ENCODE measurements at regions of chr20 and their contacts with region 1.

Region 1: DNA sequence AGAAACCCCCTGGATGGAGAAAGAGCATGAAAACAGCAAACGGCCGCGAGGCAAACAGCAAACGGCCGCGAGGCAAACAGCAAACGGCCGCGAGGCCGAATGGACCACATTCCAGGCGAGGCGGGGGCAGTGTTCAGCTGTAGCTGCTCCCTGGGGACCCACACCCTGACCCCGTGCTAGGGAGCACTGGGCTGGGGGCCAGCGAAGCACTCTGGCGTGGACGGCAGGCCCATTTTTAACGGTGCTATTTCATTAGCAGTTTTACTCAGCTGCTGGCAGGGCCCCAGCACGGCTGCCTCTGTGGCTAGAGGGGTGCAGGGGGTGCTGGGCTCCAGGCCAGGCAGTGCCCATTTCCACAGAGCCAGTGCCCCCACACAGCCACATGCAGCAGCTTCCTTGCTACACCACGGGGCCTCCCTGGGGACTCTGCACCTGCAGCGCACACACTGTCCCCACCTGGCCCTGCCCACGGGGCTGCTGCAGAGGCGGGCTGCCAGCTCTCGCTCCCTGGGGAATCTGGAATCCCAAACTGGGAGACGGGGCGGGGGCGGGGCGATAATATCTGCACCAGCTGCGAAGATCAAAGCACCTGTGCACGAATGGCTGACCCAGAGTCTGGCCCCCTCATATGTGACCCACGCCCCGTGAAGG is 35.6 kb upstream of the SLCO4A1 start:
- DNase-seq: no peak
- ATAC-seq: peak; percentile 75
- H3K4me3 ChIP-seq: no peak overlapping the region
- H3K27ac ChIP-seq: peak overlapping the region; percentile 98
- H3K4me1 ChIP-seq: peaks cover 69% of the 10 kb centered on the region
- H3K27me3 ChIP-seq: no peaks in the 10 kb centered on the region
- CTCF ChIP-seq: no peak

Region 2: GRCh38 chr20:62494980-62495748 is 111.5 kb before region 1 on chr20:
- CTCF ChIA-PET with region 1: interaction called, 3 read pairs
- POLR2A ChIA-PET with region 1: no interaction called
- in situ Hi-C with region 1: no loop called
- intact Hi-C with region 1: loop called (anchors 5 kb)
- DNase-seq: no peak
- ATAC-seq: no peak
- H3K4me3 ChIP-seq: no peak overlapping the region
- H3K27ac ChIP-seq: peak overlapping the region; percentile 79
- H3K4me1 ChIP-seq: peaks cover 62% of the 10 kb centered on the region
- H3K27me3 ChIP-seq: no peaks in the 10 kb centered on the region
- CTCF ChIP-seq: no peak

Region 3: DNA sequence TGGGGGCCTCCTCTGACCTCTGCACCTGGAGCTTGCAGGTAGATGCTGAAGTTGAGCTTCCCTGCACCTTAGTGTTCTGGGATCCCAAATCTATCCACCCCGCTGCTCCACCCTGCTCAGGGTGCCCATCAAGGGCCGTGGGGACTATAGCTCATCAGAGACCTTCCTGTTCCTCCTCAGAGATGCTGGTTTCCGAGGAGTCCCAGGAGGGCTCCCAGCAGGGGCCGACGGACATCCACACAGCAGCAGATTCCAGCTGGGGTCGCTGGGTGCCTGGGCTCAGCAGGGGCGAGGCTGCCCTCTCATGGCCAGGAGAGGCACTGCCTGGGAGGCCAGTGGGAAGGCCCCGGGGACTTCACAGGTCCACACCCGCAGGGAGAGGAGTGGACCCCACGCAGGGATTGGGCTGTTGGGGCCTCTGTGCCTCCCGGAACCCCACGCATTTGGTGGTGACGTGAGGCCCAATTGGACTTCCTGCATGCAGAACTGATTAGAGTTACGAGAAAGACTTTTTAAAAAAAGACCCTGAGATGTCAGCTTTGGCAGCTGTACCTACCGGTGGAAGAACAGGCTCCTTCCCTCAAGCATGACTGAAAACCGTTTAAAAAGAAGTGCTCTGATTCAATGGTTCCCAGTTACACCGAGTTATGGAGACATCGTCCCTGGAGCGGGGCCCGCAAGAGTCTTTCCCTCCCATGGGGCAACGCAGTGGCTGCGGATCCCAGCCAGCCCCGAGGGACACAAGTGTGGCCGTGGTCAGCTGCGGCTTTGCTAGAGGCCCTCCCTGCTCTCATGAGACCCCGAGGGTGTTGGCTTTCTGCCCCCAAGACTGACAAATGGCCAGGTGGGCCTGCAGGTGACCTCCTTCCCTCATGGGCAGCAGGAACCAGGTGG is 10.3 kb after region 1 on chr20:
- CTCF ChIA-PET with region 1: interaction called, 10 read pairs
- POLR2A ChIA-PET with region 1: no interaction called
- in situ Hi-C with region 1: no loop called
- intact Hi-C with region 1: no loop called
- DNase-seq: peak; percentile 52
- ATAC-seq: peak; percentile 84
- H3K4me3 ChIP-seq: peak overlapping the region in 1 of 2 experiments; percentile 20; a peak in 2 of 4 replicates
- H3K27ac ChIP-seq: peak overlapping the region; percentile 99
- H3K4me1 ChIP-seq: peaks cover 54% of the 10 kb centered on the region
- H3K27me3 ChIP-seq: no peaks in the 10 kb centered on the region
- CTCF ChIP-seq: peak; percentile 99

Measured in Panc1 (cell line).